Common myeloid progenitor, CD34-positive (primary cell): ENCODE measurements at regions of chr7 and their contacts with region 1.

Region 1: GRCh38 chr7:99918959-99919813 is at the start of gene TRIM4:
- DNase-seq: peak; percentile 86 to 95 (median 94)
- H3K4me3 ChIP-seq: peak within 1 kb of the TSS; percentile 62 to 96 (median 86)
- H3K27ac ChIP-seq: peak within 1 kb of the TSS; percentile 77 to 90
- H3K4me1 ChIP-seq: peaks cover 11 to 33% (median 16%) of the 10 kb centered on the region in 4 experiments
- H3K27me3 ChIP-seq: no peaks in the 10 kb centered on the region

Region 2: GRCh38 chr7:99949638-99950228 is 30.5 kb after region 1 on chr7:
- CTCF ChIA-PET with region 1: interaction called, 37 read pairs
- POLR2A ChIA-PET with region 1: no interaction called
- DNase-seq: peak; percentile 31 to 59 (median 51)
- H3K4me3 ChIP-seq: no peak overlapping the region
- H3K27ac ChIP-seq: no peak overlapping the region
- H3K4me1 ChIP-seq: peaks cover 0 to 5% (median 0%) of the 10 kb centered on the region in 4 experiments
- H3K27me3 ChIP-seq: peaks cover 0 to 5% (median 0%) of the 10 kb centered on the region in 5 experiments

Region 3: DNA sequence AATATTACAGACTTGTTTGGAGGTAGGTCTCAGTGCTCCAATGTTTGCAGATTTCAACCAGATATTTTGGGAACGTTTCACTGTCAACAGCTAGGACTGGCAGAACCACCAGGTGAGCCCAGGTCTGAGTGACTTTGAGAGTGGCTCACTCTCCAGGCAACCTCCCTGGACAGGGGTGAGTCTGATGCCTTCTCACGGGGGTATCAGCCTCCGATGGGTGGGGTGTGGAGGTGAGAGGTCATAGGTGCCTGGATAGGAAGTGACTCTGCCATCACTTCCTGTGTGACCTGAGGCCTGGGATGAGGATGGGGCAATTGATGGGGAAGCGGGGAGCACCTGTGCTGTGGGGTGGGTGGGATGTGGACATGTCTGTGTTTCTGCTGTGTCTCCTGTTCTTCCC is 52.1 kb after region 1 on chr7:
- CTCF ChIA-PET with region 1: no interaction called
- POLR2A ChIA-PET with region 1: no interaction called
- DNase-seq: no peak
- H3K4me3 ChIP-seq: no peak overlapping the region
- H3K27ac ChIP-seq: no peak overlapping the region
- H3K4me1 ChIP-seq: no peaks in the 10 kb centered on the region
- H3K27me3 ChIP-seq: peaks cover 0 to 6% (median 0%) of the 10 kb centered on the region in 5 experiments

Region 4: DNA sequence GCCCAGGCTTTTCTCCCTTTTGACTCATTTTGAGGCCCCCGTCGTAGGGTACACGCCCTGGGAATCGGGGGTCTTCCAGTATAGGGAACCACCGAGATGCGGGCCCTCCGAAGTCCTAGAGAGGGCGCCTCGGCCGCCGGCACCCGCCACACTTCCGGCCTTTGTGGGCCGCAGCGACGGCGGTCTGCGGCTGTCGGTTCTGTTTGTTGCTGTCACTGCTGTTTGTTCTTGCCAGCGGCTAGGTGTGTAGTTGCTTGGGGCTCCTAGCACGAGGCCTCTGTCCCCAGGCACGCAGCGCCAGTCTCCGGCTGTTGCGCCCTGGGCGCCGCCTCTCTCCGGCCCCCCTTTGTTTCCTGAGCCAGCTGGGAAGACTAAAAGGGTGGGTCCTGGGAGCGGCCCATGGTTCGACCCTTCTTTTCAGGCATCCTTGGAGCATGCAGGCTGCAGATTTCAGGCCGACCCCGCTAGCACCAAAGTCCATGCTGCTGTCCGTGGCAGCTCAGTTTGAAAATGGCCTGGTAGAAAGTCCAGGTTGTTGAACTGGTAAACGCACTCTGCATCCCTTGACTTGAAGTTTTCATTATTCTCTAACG is 78.5 kb after region 1 on chr7:
- CTCF ChIA-PET with region 1: interaction called, 213 read pairs
- POLR2A ChIA-PET with region 1: no interaction called
- DNase-seq: peak; percentile 82 to 93 (median 92)
- H3K4me3 ChIP-seq: peak overlapping the region; percentile 39 to 80 (median 66)
- H3K27ac ChIP-seq: peak overlapping the region; percentile 68 to 82
- H3K4me1 ChIP-seq: peaks cover 0 to 27% (median 13%) of the 10 kb centered on the region in 4 experiments
- H3K27me3 ChIP-seq: no peaks in the 10 kb centered on the region